ENCODE measurements at regions of chr7 and their contacts with region 1.

Region 1: DNA sequence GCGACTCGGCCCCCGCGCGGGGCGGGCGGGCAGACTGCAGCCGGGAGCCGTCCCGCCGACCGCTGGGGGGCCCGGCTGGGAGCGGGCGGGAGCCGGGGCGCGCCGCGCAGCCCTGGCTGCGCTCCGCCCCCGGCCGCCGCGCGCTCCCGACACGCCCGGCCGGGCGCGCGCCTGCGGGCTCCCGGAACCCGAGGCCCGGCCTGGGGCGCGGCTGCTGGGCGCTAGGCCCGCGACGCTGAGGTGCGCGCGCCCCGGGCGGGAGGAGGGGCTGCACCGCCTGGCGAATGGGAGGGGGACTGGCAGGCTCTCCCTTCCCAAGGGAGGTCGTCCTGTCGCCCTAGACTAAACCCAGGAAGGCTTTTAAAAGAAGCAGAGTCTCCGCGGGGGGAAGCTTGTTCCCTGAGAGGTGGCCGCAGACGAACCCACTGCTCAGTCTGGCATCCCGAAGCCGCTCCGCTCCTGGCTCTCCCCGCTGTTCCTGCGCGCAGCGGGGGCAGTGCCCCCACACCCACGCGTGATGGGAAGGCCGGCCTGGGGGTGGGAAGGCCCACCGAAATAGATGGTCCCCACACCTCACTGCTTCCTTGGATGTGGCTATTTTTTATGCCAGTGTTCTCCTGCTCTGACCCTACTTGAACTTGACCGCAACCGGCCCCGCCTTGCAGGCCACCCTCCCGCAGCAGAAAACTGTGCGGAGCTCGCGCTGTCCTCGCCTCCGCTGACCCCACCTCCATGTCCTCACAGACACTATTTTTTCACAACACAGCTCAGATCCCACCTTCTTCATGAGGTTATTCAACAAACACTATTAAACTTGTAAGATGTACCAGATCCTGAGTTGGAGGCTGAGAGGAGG is at the start of gene VOPP1:
- DNase-seq: peak; percentile 40 to 79 (median 66)
- ATAC-seq: peak; percentile 81
- H3K4me3 ChIP-seq: peak within 1 kb of the TSS; percentile 87
- H3K4me3 Mint-ChIP-seq: peak within 1 kb of the TSS; percentile 87 to 100 (median 94)
- H3K27ac ChIP-seq: peak within 1 kb of the TSS; percentile 79
- H3K27ac Mint-ChIP-seq: peak within 1 kb of the TSS; percentile 85 to 96 (median 92)
- H3K4me1 ChIP-seq: peaks cover 42 to 45% of the 10 kb centered on the region in 2 donors
- H3K4me1 Mint-ChIP-seq: peaks cover 45 to 65% (median 60%) of the 10 kb centered on the region in 7 donors
- H3K27me3 ChIP-seq: no peaks in the 10 kb centered on the region
- H3K27me3 Mint-ChIP-seq: no peaks in the 10 kb centered on the region
- total RNA-seq, gene VOPP1: 66.2 to 111 (median 82.0) TPM

Region 2: DNA sequence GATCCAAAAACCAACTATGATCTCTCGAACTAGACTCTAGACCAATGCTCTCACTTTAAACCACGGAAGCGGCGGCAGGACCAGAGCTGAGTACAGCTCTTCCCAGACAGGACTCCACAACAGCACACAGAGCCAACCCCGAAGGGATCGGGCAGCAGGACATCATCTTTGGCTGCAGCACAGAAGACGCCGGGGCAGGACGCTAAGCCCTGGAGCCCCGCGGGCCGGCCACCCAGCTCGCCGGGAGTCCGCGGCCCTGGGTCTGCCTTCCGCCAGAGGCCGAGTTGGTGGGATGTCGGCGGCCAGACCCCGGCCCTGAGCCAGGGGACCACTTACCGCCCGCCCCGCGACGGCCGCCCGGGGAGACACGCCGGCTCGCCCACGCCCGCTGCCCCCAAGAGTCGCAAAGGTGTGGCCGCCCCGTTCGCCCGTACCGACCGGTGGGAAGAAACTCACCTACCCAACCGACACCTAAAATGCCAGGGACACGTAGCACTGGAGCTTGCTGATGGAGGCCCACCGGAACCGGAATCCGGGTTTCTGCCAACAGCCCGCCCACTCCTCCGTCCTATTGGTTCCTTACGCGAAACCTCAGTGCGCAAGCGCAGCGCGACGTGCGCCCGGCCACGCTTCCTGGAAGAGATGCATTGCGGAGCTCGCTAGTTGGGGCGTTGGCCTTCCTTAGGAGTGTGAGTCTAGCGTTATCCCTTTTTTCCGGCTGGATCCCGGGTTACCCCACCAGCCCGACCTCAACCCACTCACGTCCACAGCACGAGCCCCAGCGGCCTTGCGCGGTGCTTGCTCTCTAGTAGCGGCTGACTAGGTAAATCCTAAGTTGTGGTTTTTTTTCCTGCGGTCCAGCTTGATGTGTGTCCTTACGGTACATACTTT is 813.7 kb before region 1 on chr7 and contains the start of gene SEC61G:
- CTCF ChIA-PET with region 1: no interaction called
- POLR2A ChIA-PET with region 1: interaction called, 3 read pairs
- intact Hi-C with region 1: loop called (anchors 2 to 5 kb)
- DNase-seq: peak; percentile 92 to 96 (median 94)
- ATAC-seq: peak; percentile 98
- H3K4me3 ChIP-seq: peak within 1 kb of the TSS; percentile 67
- H3K4me3 Mint-ChIP-seq: peak within 1 kb of the TSS; percentile 94 to 100 (median 100)
- H3K27ac ChIP-seq: peak within 1 kb of the TSS; percentile 83
- H3K27ac Mint-ChIP-seq: peak within 1 kb of the TSS; percentile 93 to 98 (median 96)
- H3K4me1 ChIP-seq: peaks cover 7 to 11% of the 10 kb centered on the region in 2 donors
- H3K4me1 Mint-ChIP-seq: peaks cover 15 to 54% (median 40%) of the 10 kb centered on the region in 7 donors
- H3K27me3 ChIP-seq: no peaks in the 10 kb centered on the region
- H3K27me3 Mint-ChIP-seq: peaks cover 0 to 21% (median 5%) of the 10 kb centered on the region in 5 donors
- total RNA-seq, gene SEC61G: 31.8 to 174 (median 46.6) TPM

Region 3: GRCh38 chr7:55534175-55534915 is 38.3 kb before region 1 on chr7:
- CTCF ChIA-PET with region 1: no interaction called
- POLR2A ChIA-PET with region 1: interaction called, 17 read pairs
- intact Hi-C with region 1: loop called (anchors 1 to 2 kb)
- DNase-seq: peak in 3 of 9 donors; percentile 7 to 79 (median 36)
- ATAC-seq: peak; percentile 75
- H3K4me3 ChIP-seq: no peak overlapping the region
- H3K4me3 Mint-ChIP-seq: peak overlapping the region; percentile 75 to 86 (median 82)
- H3K27ac ChIP-seq: no peak overlapping the region
- H3K27ac Mint-ChIP-seq: peak overlapping the region; percentile 74 to 98 (median 83)
- H3K4me1 ChIP-seq: peaks cover 57 to 75% of the 10 kb centered on the region in 2 donors
- H3K4me1 Mint-ChIP-seq: peaks cover 73 to 98% (median 90%) of the 10 kb centered on the region in 7 donors
- H3K27me3 ChIP-seq: no peaks in the 10 kb centered on the region
- H3K27me3 Mint-ChIP-seq: peaks cover 0 to 2% (median 0%) of the 10 kb centered on the region in 5 donors

Region 4: DNA sequence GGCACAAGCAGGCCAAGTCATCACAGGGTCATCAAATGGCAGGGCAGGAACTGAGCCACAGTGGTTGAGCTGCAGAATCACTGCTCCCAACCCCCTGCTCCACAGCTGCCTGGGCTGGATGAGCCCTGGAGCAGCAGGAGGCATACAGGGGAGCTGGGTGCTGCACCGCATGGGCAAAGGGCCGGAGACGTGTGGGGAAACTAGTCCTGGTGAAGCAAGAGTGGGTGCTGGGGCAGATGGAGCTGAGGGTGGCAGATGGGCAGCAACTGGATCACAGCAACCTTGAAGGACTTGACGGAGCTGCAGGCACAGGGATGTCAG is 15.7 kb after region 1 on chr7:
- CTCF ChIA-PET with region 1: interaction called, 6 read pairs
- POLR2A ChIA-PET with region 1: interaction called, 37 read pairs
- intact Hi-C with region 1: loop called (anchors 1 to 2 kb)
- DNase-seq: no peak
- ATAC-seq: no peak
- H3K4me3 ChIP-seq: no peak overlapping the region
- H3K4me3 Mint-ChIP-seq: no peak overlapping the region
- H3K27ac ChIP-seq: no peak overlapping the region
- H3K27ac Mint-ChIP-seq: peak overlapping the region in 1 of 9 donors; percentile 61
- H3K4me1 ChIP-seq: peaks cover 0 to 1% of the 10 kb centered on the region in 2 donors
- H3K4me1 Mint-ChIP-seq: peaks cover 5 to 36% (median 10%) of the 10 kb centered on the region in 7 donors
- H3K27me3 ChIP-seq: no peaks in the 10 kb centered on the region
- H3K27me3 Mint-ChIP-seq: peaks cover 0 to 3% (median 0%) of the 10 kb centered on the region in 5 donors

Region 5: DNA sequence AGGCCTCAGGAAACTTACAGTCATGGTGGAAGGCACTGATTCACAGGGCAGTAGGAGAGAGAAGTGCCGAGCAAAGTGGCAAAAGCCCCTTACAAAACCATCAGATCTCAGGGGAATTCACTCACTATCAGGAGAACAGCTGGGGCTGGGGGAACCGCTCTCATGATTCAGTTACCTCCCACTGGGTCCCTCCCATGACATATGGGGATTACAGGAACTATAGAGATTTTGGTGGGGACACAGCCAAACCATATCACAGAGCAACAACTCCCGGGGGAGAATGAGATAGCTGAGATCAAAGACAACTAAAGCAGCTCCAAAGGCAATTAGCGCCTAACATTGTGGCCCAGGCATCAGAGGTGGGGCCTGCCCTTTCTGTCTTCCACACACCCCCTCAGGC is 85.0 kb after region 1 on chr7:
- CTCF ChIA-PET with region 1: no interaction called
- POLR2A ChIA-PET with region 1: no interaction called
- intact Hi-C with region 1: no loop called
- DNase-seq: no peak
- ATAC-seq: no peak
- H3K4me3 ChIP-seq: no peak overlapping the region
- H3K4me3 Mint-ChIP-seq: no peak overlapping the region
- H3K27ac ChIP-seq: no peak overlapping the region
- H3K27ac Mint-ChIP-seq: no peak overlapping the region
- H3K4me1 ChIP-seq: no peaks in the 10 kb centered on the region
- H3K4me1 Mint-ChIP-seq: no peaks in the 10 kb centered on the region
- H3K27me3 ChIP-seq: no peaks in the 10 kb centered on the region
- H3K27me3 Mint-ChIP-seq: peaks cover 0 to 18% (median under 1%) of the 10 kb centered on the region in 5 donors

Region 6: DNA sequence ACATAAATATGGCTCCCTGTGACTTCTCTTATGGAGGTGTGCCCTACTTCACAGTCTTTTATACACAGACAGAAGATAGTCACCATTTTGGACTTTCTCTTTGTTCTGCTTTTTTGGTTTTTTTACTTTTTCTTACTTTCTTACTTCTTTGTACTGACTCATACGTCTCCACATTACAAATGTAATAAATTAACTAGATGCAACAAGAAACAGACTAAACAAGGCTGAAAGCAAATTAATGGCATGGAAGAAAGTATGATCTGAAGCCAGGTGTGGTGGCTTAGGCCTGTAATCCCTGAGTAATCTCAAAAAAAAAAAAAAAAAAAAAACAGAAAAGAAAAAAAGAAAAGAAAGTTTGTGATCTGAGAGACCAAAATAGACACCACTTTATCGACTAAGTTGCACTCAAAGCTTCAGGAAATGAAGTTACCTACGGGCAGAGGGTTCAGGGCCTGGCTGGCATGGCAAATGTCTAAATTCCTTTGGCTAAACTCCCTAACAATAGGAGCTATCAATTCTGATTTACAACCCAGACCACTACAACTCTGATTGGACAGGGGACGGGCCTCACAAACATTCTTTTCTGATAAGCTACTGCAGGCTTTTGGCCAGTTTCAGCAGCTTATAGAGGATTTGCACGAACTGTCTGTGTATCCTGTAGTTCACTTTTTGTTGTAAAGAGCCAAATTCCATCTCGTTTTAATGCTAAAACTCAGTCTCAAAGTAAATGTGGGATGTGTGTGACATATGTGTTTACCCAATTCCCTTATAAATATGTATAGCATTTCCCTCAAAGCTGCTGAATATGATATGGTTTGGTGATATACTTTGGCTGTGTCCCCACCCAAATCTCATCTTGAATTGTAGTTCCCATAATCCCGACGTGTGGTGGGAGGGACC is 160.9 kb after region 1 on chr7:
- CTCF ChIA-PET with region 1: no interaction called
- POLR2A ChIA-PET with region 1: no interaction called
- intact Hi-C with region 1: no loop called
- DNase-seq: no peak
- ATAC-seq: no peak
- H3K4me3 ChIP-seq: no peak overlapping the region
- H3K4me3 Mint-ChIP-seq: no peak overlapping the region
- H3K27ac ChIP-seq: no peak overlapping the region
- H3K27ac Mint-ChIP-seq: no peak overlapping the region
- H3K4me1 ChIP-seq: no peaks in the 10 kb centered on the region
- H3K4me1 Mint-ChIP-seq: no peaks in the 10 kb centered on the region
- H3K27me3 ChIP-seq: no peaks in the 10 kb centered on the region
- H3K27me3 Mint-ChIP-seq: no peaks in the 10 kb centered on the region

Region 7: GRCh38 chr7:55951637-55952351 is 379.2 kb after region 1 on chr7 and contains the start of gene MRPS17:
- CTCF ChIA-PET with region 1: no interaction called
- POLR2A ChIA-PET with region 1: no interaction called
- intact Hi-C with region 1: loop called in 1 of 2 experiments (anchors 5 kb)
- DNase-seq: peak; percentile 86 to 96 (median 94)
- ATAC-seq: peak; percentile 100
- H3K4me3 ChIP-seq: peak within 1 kb of the TSS; percentile 68
- H3K4me3 Mint-ChIP-seq: peak within 1 kb of the TSS; percentile 84 to 99 (median 96)
- H3K27ac ChIP-seq: peak within 1 kb of the TSS; percentile 86
- H3K27ac Mint-ChIP-seq: peak within 1 kb of the TSS; percentile 92 to 98 (median 96)
- H3K4me1 ChIP-seq: peaks cover 0 to 4% of the 10 kb centered on the region in 2 donors
- H3K4me1 Mint-ChIP-seq: peaks cover 10 to 33% (median 24%) of the 10 kb centered on the region in 7 donors
- H3K27me3 ChIP-seq: no peaks in the 10 kb centered on the region
- H3K27me3 Mint-ChIP-seq: peaks cover 0 to 2% (median 0%) of the 10 kb centered on the region in 5 donors
- total RNA-seq, gene MRPS17: 8.3 to 16.7 (median 12.0) TPM

Region 8: DNA sequence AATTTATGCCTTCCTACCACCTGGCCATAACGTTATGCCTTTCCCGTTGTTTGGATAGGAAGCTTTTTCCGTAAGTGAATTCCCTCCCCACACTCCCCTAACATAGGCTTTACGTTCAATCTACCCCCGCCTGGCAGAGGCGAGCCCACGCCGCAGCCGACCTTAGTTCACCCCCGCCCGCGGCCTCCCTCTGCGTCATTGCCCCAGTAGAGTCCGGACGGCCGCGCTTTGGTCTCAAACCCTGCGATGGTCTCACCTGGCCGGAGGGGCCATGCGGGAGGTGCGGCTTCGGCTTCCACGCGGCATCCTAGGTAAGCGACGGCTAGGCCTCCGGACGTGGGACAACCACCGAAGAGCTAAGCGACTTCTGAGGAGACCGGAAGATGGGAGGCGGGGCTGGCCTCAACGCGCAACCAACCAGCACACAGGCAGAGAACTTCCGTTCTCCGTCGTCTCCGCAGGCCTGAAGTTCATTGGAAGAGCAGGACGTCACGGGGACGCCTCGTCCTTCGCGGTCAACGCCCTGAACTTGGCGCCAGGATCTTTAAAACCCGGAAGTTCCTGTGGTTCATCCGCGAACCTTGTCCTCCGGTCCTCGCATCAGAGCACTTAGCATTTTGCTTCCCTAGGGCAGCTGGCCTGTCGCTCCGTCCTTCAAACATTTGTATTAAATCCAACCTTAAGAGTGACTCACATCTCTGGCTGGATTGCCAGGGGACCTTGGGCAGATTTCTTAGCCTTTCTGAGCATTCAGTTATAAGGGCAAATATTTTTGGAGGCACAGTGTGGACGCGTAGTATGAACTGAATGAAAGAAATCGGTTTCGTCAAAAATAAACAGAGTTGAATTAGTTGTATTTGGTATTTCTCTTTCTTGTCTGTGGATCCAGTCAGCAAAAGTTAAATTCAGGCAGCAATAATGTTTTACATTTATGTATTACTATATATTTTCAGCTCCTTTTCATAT is 533.8 kb after region 1 on chr7 and contains the start of gene CHCHD2:
- CTCF ChIA-PET with region 1: no interaction called
- POLR2A ChIA-PET with region 1: no interaction called
- intact Hi-C with region 1: loop called (anchors 2 to 5 kb)
- DNase-seq: peak; percentile 75 to 96 (median 93)
- ATAC-seq: peak; percentile 99
- H3K4me3 ChIP-seq: peak within 1 kb of the TSS; percentile 72
- H3K4me3 Mint-ChIP-seq: peak within 1 kb of the TSS; percentile 94 to 100 (median 96)
- H3K27ac ChIP-seq: peak within 1 kb of the TSS; percentile 95
- H3K27ac Mint-ChIP-seq: peak within 1 kb of the TSS; percentile 97 to 99 (median 98)
- H3K4me1 ChIP-seq: peaks cover 18 to 20% of the 10 kb centered on the region in 2 donors
- H3K4me1 Mint-ChIP-seq: peaks cover 19 to 43% (median 33%) of the 10 kb centered on the region in 7 donors
- H3K27me3 ChIP-seq: no peaks in the 10 kb centered on the region
- H3K27me3 Mint-ChIP-seq: no peaks in the 10 kb centered on the region
- total RNA-seq, gene CHCHD2: 133 to 451 (median 179) TPM

Measured in naive thymus-derived CD4-positive, alpha-beta T cell (primary cell).